Activated CD8-positive, alpha-beta memory T cell treated with anti-CD3 and anti-CD28 coated beads, Interleukin-2, amount 10 ng/mL, durations not matched to agents 7 days and 5 days (primary cell): ENCODE measurements at regions of chr12 and their contacts with region 1.

Region 1: DNA sequence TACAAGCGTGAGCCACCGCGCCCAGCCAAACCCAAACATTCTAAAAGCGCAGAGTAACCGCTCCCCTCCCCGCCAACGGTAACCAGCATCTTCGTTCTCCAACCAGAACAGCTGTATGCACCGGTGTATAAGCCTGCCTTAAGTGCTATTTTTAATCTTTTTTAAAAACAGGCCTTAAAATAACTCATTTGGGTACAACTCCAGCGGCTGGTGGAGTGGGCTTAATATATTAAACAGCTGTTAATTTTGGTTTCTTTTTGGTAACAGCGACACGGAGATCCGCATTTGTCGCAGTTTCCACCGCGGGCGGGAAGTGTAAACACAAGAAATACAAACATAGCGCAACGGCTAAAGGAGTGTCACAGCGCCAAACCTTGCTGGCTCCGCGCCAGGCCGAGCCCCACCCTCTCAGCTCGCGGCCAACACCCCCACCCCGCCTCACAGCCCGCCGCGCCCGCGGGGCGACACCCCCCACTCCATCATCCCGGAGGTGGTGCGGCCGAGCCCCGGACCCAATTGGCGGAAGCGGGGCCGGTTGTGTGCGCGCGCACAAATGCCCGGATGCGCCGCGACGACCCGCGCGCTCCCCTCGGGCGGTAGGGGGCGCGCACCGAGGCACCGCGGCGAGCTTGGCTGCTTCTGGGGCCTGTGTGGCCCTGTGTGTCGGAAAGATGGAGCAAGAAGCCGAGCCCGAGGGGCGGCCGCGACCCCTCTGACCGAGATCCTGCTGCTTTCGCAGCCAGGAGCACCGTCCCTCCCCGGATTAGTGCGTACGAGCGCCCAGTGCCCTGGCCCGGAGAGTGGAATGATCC is at the start of gene MDM2:
- DNase-seq: peak; percentile 98
- ATAC-seq: peak; percentile 89
- H3K4me3 Mint-ChIP-seq: peak within 1 kb of the TSS; percentile 99
- H3K27ac Mint-ChIP-seq: peak within 1 kb of the TSS; percentile 100
- H3K4me1 Mint-ChIP-seq: peaks cover 36% of the 10 kb centered on the region
- H3K27me3 Mint-ChIP-seq: no peaks in the 10 kb centered on the region
- total RNA-seq, gene MDM2: 235 to 253 TPM

Region 2: DNA sequence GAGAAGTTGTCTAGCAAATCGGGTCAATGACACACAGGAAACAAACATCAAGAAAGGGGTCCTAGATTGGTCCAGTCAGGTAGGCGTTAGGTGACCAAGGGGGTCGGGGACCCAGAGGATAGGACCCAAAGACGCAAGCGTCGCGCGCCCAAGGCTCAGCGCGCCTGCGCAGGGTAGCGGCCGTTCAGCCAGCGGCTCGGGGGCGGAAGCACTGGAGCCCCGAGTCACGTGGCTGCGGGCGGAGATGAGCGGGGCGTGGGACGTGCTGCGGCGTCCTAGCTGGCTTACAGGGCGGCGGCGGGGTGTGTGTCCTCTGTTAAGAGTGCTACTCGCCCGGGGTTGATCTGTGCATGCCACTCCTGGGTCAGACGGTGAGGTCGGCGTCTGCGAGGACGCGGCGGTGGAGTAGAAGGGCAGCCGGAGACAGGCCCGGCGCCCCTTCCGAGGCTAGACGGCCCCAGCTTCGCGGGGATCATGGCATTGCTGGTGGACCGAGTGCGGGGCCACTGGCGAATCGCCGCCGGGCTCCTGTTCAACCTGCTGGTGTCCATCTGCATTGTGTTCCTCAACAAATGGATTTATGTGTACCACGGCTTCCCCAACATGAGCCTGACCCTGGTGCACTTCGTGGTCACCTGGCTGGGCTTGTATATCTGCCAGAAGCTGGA is 61.7 kb before region 1 on chr12 and contains the start of gene SLC35E3:
- CTCF ChIA-PET with region 1: interaction called, 26 read pairs
- DNase-seq: peak; percentile 96
- ATAC-seq: peak; percentile 99
- H3K4me3 Mint-ChIP-seq: peak within 1 kb of the TSS; percentile 96
- H3K27ac Mint-ChIP-seq: peak within 1 kb of the TSS; percentile 91
- H3K4me1 Mint-ChIP-seq: peaks cover 36% of the 10 kb centered on the region
- H3K27me3 Mint-ChIP-seq: no peaks in the 10 kb centered on the region
- total RNA-seq, gene SLC35E3: 10.3 to 10.8 TPM

Region 3: GRCh38 chr12:68831272-68831671 is 23.5 kb after region 1 on chr12:
- CTCF ChIA-PET with region 1: interaction called, 40 read pairs
- DNase-seq: no peak
- ATAC-seq: no peak
- H3K4me3 Mint-ChIP-seq: no peak overlapping the region
- H3K27ac Mint-ChIP-seq: no peak overlapping the region
- H3K4me1 Mint-ChIP-seq: peaks cover 14% of the 10 kb centered on the region
- H3K27me3 Mint-ChIP-seq: no peaks in the 10 kb centered on the region

Region 4: GRCh38 chr12:68850390-68850789 is 42.6 kb after region 1 on chr12:
- CTCF ChIA-PET with region 1: no interaction called
- DNase-seq: no peak
- ATAC-seq: no peak
- H3K4me3 Mint-ChIP-seq: no peak overlapping the region
- H3K27ac Mint-ChIP-seq: no peak overlapping the region
- H3K4me1 Mint-ChIP-seq: no peaks in the 10 kb centered on the region
- H3K27me3 Mint-ChIP-seq: peaks cover 12% of the 10 kb centered on the region